BJ (cell line): ENCODE measurements at regions of chr11 and their contacts with region 1.

Region 1: GRCh38 chr11:6757373-6757967 is 14.3 kb downstream of the OR2AG2 start:
- DNase-seq: no peak
- H3K4me3 ChIP-seq: no peak overlapping the region
- H3K27me3 ChIP-seq: peaks cover 1% of the 10 kb centered on the region; the same call in 1 of the 2 replicates
- CTCF ChIP-seq: peak; percentile 76

Region 2: GRCh38 chr11:6269994-6270393 is 487.5 kb before region 1 on chr11:
- CTCF ChIA-PET with region 1: no interaction called
- POLR2A ChIA-PET with region 1: no interaction called
- DNase-seq: no peak
- H3K4me3 ChIP-seq: no peak overlapping the region
- H3K27me3 ChIP-seq: peaks cover 1% of the 10 kb centered on the region; the same call in 1 of the 2 replicates
- CTCF ChIP-seq: no peak

Region 3: DNA sequence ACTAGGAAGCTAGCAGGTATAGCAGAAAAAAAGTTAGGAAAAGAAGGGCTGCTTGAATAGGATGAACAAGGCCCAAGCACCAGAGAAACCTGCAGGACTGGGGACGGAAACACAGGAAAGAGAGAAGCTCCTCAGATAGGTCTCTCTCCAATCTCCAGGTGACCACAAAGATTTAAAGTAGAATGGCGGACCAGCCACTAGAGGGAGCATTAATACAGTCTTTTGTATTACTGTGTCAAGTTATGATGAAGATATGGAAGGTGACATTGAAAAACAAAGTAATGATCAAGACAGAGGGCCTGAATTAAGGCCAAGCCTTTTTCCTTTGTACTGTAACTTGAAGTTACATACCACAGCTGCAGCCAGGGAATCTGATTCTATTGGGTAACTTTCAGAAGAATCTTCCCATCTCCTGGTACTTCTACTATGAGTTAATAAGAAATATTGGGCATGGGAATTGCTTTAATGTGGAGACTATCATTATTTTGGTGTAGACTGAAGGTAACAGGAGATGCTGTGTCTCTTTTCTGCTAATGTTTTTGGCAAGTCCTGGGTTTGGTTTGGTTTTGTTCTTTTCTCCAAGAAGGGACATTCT is 19.5 kb before region 1 on chr11:
- CTCF ChIA-PET with region 1: interaction called, 110 read pairs
- POLR2A ChIA-PET with region 1: no interaction called
- DNase-seq: no peak
- H3K4me3 ChIP-seq: no peak overlapping the region
- H3K27me3 ChIP-seq: no peaks in the 10 kb centered on the region
- CTCF ChIP-seq: peak; percentile 70

Region 4: GRCh38 chr11:6746086-6746618 is 11.3 kb before region 1 on chr11:
- CTCF ChIA-PET with region 1: interaction called, 110 read pairs
- POLR2A ChIA-PET with region 1: no interaction called
- DNase-seq: no peak
- H3K4me3 ChIP-seq: no peak overlapping the region
- H3K27me3 ChIP-seq: no peaks in the 10 kb centered on the region
- CTCF ChIP-seq: no peak

Region 5: GRCh38 chr11:6771926-6772893 is 14.7 kb after region 1 on chr11 and contains the start of gene OR2AG2:
- CTCF ChIA-PET with region 1: interaction called, 14 read pairs
- POLR2A ChIA-PET with region 1: no interaction called
- DNase-seq: no peak
- H3K4me3 ChIP-seq: no peak within 1 kb of the TSS
- H3K27me3 ChIP-seq: no peaks in the 10 kb centered on the region
- CTCF ChIP-seq: no peak
- polyA plus RNA-seq, gene OR2AG2: 0.28 and 0.60 TPM in 2 replicates